ENCODE measurements at regions of chr10 and their contacts with region 1.

Region 1: GRCh38 chr10:94735197-94735596 is 27.3 kb upstream of the CYP2C19 start:
- DNase-seq: no peak
- H3K4me3 ChIP-seq: no peak overlapping the region
- H3K27ac ChIP-seq: no peak overlapping the region
- H3K4me1 ChIP-seq: no peaks in the 10 kb centered on the region
- H3K27me3 ChIP-seq: no peaks in the 10 kb centered on the region
- CTCF ChIP-seq: no peak

Region 2: GRCh38 chr10:94459385-94459784 is 275.8 kb before region 1 on chr10:
- CTCF ChIA-PET with region 1: no interaction called
- POLR2A ChIA-PET with region 1: no interaction called
- intact Hi-C with region 1: no loop called
- DNase-seq: no peak
- H3K4me3 ChIP-seq: no peak overlapping the region
- H3K27ac ChIP-seq: no peak overlapping the region
- H3K4me1 ChIP-seq: no peaks in the 10 kb centered on the region
- H3K27me3 ChIP-seq: no peaks in the 10 kb centered on the region
- CTCF ChIP-seq: no peak

Region 3: DNA sequence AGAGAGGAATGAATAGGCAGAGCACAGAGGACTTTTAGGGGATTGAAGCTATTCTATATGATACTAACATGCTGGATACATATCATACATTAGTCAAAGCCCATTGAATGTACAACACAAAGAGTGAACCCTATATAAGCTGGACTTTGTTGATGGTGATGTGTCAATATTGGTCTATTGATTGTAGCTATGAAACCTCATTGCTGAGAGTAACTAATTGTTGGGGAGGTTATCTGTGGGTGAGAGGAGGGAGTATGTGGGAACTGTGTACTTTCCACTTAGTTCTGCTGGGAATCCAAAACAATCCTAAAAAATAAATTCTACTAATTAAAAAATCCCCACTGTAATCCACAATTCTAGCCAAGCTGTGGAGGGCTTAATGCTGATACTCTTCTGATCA is 181.2 kb after region 1 on chr10:
- CTCF ChIA-PET with region 1: no interaction called
- POLR2A ChIA-PET with region 1: no interaction called
- intact Hi-C with region 1: no loop called
- DNase-seq: no peak
- H3K4me3 ChIP-seq: no peak overlapping the region
- H3K27ac ChIP-seq: no peak overlapping the region
- H3K4me1 ChIP-seq: no peaks in the 10 kb centered on the region
- H3K27me3 ChIP-seq: no peaks in the 10 kb centered on the region
- CTCF ChIP-seq: no peak

Region 4: GRCh38 chr10:95531994-95532399 is 796.8 kb after region 1 on chr10:
- CTCF ChIA-PET with region 1: interaction called, 10 read pairs
- POLR2A ChIA-PET with region 1: no interaction called
- intact Hi-C with region 1: no loop called
- DNase-seq: no peak
- H3K4me3 ChIP-seq: no peak overlapping the region
- H3K27ac ChIP-seq: no peak overlapping the region
- H3K4me1 ChIP-seq: peaks cover 2% of the 10 kb centered on the region
- H3K27me3 ChIP-seq: no peaks in the 10 kb centered on the region
- CTCF ChIP-seq: no peak